Natural killer cell (primary cell): ENCODE measurements at regions of chr1 and their contacts with region 1.

Region 1: GRCh38 chr1:24391882-24392603 is 21.5 kb downstream of the STPG1 start:
- DNase-seq: peak in 1 of 2 donors; percentile 81
- ATAC-seq: peak; percentile 41 to 66 (median 58)
- H3K4me3 ChIP-seq: no peak overlapping the region
- H3K4me3 Mint-ChIP-seq: peak overlapping the region; percentile 61
- H3K27ac ChIP-seq: peak overlapping the region; percentile 74
- H3K27ac Mint-ChIP-seq: peak overlapping the region; percentile 32 to 73
- H3K4me1 ChIP-seq: peaks cover 8% of the 10 kb centered on the region
- H3K4me1 Mint-ChIP-seq: peaks cover 6 to 8% of the 10 kb centered on the region in 2 donors
- H3K27me3 ChIP-seq: no peaks in the 10 kb centered on the region
- H3K27me3 Mint-ChIP-seq: peaks cover 6 to 37% of the 10 kb centered on the region in 2 donors
- CTCF ChIP-seq: no peak

Region 2: DNA sequence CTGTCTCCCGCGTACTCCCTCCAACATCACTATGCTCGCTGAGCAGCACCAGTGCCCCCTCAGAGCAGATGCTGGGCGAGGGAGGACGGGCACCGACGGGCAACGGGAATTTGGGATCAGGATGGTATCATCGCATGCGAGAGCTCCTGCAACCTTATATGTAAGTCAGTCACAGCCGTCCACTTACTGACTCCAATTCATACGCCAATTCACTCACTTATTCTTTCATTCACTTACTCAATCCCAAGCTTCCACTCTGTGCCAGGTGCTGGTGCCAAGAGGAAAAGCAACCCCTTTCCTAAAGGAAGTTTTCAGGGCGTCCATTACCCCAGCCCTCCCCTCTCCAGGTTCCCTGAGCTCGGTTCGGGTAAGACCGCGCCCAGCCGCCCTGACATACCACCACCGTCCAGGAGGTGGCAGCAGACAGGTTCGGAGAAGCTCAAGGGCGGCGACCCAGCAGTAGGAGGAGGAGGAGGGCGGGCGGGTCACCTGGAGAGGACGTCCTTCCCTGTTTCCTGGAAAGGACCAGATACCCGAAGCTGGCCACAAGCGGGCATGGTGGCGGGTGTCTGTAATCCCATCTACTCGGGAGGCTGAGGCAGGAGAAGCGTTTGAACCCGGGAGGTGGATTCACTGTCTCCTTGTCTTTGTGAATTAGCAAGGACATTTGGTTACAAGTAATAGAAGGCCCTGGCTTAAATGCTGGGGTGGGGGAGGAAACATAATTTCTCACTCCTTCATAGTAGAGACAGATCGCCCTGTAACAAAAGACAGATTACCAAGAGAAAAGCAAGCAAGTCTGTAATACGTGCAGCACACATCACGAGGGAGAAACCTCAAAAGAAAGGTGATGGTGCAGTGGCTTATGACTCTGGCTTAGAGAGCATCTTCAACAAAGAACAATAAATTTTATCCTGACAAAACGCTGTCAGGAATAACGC is 241.5 kb before region 1 on chr1:
- intact Hi-C with region 1: loop called (anchors 1 kb)
- DNase-seq: peak; percentile 78 to 90
- ATAC-seq: peak; percentile 91 to 99 (median 98)
- H3K4me3 ChIP-seq: no peak overlapping the region
- H3K4me3 Mint-ChIP-seq: no peak overlapping the region
- H3K27ac ChIP-seq: no peak overlapping the region
- H3K27ac Mint-ChIP-seq: no peak overlapping the region
- H3K4me1 ChIP-seq: peaks cover 9% of the 10 kb centered on the region
- H3K4me1 Mint-ChIP-seq: peaks cover 8 to 9% of the 10 kb centered on the region in 2 donors
- H3K27me3 ChIP-seq: peaks cover 7% of the 10 kb centered on the region
- H3K27me3 Mint-ChIP-seq: peaks cover 24 to 38% of the 10 kb centered on the region in 2 donors
- CTCF ChIP-seq: peak; percentile 85

Region 3: DNA sequence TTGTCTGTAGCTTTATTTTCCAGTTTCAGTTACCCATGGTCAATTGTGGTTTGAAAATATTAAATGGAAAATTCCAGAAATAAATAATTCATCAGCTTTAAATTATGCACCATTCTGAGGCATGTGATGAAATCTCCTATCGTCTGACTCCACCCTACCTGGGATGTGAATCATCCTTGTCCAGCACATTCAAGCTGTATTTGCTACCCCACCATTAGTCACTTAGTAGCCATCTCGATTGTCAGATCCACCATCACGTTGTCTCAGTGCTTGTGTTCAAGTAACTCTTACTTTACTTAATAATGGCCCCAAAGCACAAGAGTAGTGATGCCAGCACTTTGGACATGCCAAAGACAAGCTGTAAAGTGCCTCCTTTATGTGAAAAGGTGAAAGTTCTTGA is 17.5 kb after region 1 on chr1:
- intact Hi-C with region 1: no loop called
- DNase-seq: no peak
- ATAC-seq: no peak
- H3K4me3 ChIP-seq: no peak overlapping the region
- H3K4me3 Mint-ChIP-seq: no peak overlapping the region
- H3K27ac ChIP-seq: no peak overlapping the region
- H3K27ac Mint-ChIP-seq: no peak overlapping the region
- H3K4me1 ChIP-seq: peaks cover 14% of the 10 kb centered on the region
- H3K4me1 Mint-ChIP-seq: peaks cover 10 to 13% of the 10 kb centered on the region in 2 donors
- H3K27me3 ChIP-seq: no peaks in the 10 kb centered on the region
- H3K27me3 Mint-ChIP-seq: peaks cover 3 to 31% of the 10 kb centered on the region in 2 donors
- CTCF ChIP-seq: no peak

Region 4: DNA sequence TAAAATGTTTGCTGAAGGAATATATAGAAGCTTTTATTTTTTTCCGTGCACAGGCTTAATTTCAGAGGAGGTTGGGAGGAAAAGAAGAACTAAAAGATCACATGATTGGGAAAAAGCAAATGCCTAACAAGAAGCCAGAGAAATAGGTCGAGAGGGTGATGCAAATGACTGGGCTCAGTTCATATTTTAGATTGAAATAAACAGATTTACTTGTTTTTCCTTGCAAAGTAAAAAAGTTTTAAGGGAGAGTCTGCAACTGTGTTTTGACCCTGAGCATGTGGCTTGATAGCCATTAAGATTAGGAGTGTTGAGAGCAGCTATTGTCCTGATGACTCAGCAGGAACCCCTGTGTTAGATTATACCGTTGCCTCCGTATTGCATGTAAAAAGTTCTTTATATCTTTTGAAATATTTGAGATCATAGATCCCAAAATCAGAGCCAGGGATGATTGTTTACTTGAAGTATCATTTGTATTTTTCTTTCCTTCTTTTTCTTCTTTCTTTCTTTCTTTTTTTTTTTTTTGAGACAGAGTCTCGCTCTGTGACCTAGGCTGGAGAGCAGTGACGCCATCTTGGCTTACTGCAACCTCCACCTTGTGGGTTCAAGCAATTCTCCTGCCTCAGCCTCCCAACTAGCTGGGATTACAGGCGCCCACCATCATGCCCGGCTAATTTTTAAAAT is 373.4 kb after region 1 on chr1:
- intact Hi-C with region 1: no loop called
- DNase-seq: no peak
- ATAC-seq: no peak
- H3K4me3 ChIP-seq: no peak overlapping the region
- H3K4me3 Mint-ChIP-seq: no peak overlapping the region
- H3K27ac ChIP-seq: no peak overlapping the region
- H3K27ac Mint-ChIP-seq: no peak overlapping the region
- H3K4me1 ChIP-seq: no peaks in the 10 kb centered on the region
- H3K4me1 Mint-ChIP-seq: no peaks in the 10 kb centered on the region
- H3K27me3 ChIP-seq: no peaks in the 10 kb centered on the region
- H3K27me3 Mint-ChIP-seq: no peaks in the 10 kb centered on the region
- CTCF ChIP-seq: no peak